ENCODE measurements at regions of chr16 and their contacts with region 1.

Region 1: GRCh38 chr16:31073968-31074813 is at the starts of genes ZNF646 and ZNF668:
- DNase-seq: peak; percentile 97
- ATAC-seq: peak; percentile 90
- H3K4me3 ChIP-seq: peak within 1 kb of the TSS; percentile 81
- H3K27ac ChIP-seq: peak within 1 kb of the TSS; percentile 76
- H3K4me1 ChIP-seq: peaks cover 15% of the 10 kb centered on the region; the same call in 1 of the 2 replicates
- H3K27me3 ChIP-seq: no peaks in the 10 kb centered on the region
- CTCF ChIP-seq: no peak
- total RNA-seq, gene ZNF646: 5.5 and 8.5 TPM in 2 replicates
- total RNA-seq, gene ZNF668: 15.6 and 19.2 TPM in 2 replicates

Region 2: GRCh38 chr16:30984669-30985400 is 89.4 kb before region 1 on chr16 and contains the start of gene HSD3B7:
- CTCF ChIA-PET with region 1: interaction called, 5 read pairs
- POLR2A ChIA-PET with region 1: no interaction called
- intact Hi-C with region 1: loop called (anchors 1 kb)
- DNase-seq: peak; percentile 78
- ATAC-seq: peak; percentile 90
- H3K4me3 ChIP-seq: peak within 1 kb of the TSS; percentile 52; the same call in 1 of the 2 replicates
- H3K27ac ChIP-seq: no peak within 1 kb of the TSS
- H3K4me1 ChIP-seq: peaks cover 7% of the 10 kb centered on the region; the same call in 1 of the 2 replicates
- H3K27me3 ChIP-seq: no peaks in the 10 kb centered on the region
- CTCF ChIP-seq: peak; percentile 74
- total RNA-seq, gene HSD3B7: 12.0 and 16.3 TPM in 2 replicates

Region 3: DNA sequence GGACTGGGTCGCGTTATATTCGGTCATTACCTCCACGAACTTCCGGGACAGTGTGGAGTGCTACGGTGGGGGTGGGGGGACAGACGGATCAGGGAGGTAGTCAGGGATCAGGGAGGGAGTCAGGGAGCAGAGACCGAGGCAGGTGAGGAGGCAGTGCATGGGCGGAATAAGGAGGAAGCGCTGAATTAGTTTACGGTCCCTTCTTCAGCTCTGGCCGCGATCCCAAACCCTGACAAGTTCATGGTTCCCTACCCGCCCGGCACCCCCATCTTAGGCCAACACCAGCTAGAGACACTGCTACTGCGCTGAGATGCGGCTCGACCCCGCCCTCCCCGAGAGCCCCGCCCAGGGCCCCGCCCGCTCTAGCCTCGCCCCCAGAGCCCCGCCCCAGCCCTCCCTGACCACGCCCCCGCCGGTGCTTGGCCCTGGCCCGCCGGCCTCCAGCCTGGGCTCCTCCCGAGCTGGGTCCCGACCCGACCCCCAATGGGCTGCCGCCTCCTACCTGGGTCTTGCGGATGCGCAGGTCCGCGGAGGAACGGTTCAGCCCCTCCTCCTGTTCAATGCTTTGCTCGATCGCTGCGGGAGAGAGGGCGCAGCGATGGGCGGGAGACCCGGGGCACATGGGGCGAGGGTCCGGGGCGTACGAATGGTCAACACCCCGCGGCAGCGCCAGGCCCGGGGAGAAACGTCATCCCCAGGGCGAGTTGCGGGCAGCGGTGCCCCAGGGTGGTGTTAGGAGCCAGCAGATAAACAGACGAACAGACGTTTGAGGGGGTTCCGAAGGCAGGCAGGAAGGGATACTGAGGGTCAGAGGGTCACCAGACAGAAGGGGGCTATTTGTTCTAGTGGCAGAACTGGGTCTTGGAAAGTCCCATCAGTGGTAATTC is 76.9 kb before region 1 on chr16:
- CTCF ChIA-PET with region 1: no interaction called
- POLR2A ChIA-PET with region 1: no interaction called
- intact Hi-C with region 1: loop called (anchors 5 kb)
- DNase-seq: peak; percentile 68
- ATAC-seq: peak; percentile 80
- H3K4me3 ChIP-seq: peak overlapping the region; percentile 83
- H3K27ac ChIP-seq: peak overlapping the region; percentile 86
- H3K4me1 ChIP-seq: peaks cover 31% of the 10 kb centered on the region
- H3K27me3 ChIP-seq: no peaks in the 10 kb centered on the region
- CTCF ChIP-seq: no peak

Region 4: GRCh38 chr16:31032736-31033708 is 41.2 kb before region 1 on chr16 and contains the start of gene STX4:
- CTCF ChIA-PET with region 1: no interaction called
- POLR2A ChIA-PET with region 1: no interaction called
- intact Hi-C with region 1: loop called (anchors 2 kb)
- DNase-seq: peak; percentile 92
- ATAC-seq: peak; percentile 80
- H3K4me3 ChIP-seq: peak within 1 kb of the TSS; percentile 98
- H3K27ac ChIP-seq: peak within 1 kb of the TSS; percentile 42
- H3K4me1 ChIP-seq: peaks cover 11% of the 10 kb centered on the region; the same call in 1 of the 2 replicates
- H3K27me3 ChIP-seq: no peaks in the 10 kb centered on the region
- CTCF ChIP-seq: no peak
- total RNA-seq, gene STX4: 27.4 and 36.1 TPM in 2 replicates

Region 5: DNA sequence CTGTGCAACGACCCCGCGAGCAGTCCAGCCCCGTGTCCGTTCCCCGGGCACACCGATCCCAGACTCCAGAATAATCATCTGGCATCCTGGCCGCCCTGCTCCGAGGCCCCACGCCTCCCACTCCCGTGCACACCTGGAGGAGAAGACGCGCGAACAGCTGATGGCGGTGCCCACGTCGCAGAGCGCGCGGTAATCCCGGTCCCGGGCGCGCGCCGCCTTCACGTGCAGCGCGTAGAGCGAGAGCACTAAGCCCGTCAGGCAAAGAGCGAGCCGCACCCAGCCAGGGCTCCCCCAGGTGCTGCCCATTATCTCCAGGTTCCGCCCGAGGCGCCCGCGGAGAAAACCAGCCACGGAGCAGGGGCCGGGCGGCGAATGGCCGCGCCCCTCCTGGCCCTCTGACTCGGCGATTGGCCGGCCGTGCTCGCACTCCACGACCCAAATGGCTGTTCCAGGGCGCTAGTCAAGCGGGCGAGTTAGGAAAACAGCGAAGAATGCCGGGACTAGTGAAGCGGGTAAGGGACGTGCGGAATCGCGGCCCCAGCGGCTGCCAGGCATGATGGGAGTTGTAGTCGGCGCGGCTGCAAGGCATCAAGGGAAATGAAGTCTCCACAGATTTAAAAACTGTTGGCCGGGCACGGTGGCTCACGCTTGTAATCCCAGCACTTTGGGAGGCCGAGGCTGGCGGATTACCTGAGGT is 20.4 kb after region 1 on chr16 and contains the start of gene VKORC1:
- CTCF ChIA-PET with region 1: no interaction called
- POLR2A ChIA-PET with region 1: no interaction called
- intact Hi-C with region 1: loop called (anchors 1 kb)
- DNase-seq: peak; percentile 96
- ATAC-seq: peak; percentile 94
- H3K4me3 ChIP-seq: peak within 1 kb of the TSS; percentile 98
- H3K27ac ChIP-seq: peak within 1 kb of the TSS; percentile 68
- H3K4me1 ChIP-seq: peaks cover 7% of the 10 kb centered on the region; the same call in 1 of the 2 replicates
- H3K27me3 ChIP-seq: no peaks in the 10 kb centered on the region
- CTCF ChIP-seq: no peak
- total RNA-seq, gene VKORC1: 105 and 127 TPM in 2 replicates

Region 6: DNA sequence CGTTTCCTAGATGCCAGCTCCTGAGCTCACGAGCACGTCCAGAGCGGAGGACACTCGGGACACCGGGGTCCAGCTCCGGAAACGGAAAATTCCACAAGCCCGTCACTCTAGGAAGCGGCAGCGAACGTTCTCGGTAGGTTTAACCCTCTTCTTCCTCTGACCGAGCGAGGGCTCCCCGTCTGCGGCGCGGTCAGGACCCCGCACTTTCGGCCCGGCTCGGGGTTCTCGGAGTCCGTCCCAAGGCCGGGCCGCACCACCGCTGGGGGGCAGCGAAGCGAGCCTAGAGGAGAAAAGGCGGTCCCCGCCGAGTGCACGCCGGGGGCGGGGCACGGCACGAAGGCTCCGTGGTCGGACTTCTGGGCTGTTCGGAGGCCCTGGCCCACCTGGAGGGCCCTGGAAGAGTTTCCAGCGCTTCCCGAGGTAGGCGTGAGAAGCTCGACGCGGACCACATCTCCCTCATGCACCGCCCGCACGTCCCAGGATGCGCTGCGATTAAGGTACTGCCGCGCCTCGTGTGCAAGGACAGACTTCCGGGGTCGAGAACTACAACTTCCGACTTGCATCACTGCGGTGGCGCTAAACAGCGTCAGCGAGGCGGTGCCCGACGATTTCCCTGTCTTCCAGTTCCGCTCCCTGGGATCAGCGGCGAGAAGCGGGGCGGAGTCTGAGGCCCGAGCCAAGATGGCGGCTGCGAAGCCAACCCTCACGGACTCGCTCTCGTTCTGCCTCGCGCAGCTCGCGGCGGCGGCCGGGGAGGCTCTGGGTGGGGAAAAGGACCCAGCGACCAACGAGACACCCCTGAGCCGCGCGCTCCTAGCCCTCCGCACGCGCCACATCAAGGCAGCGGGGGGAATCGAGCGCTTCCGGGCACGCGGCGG is 384.9 kb after region 1 on chr16 and contains the start of gene ARMC5:
- CTCF ChIA-PET with region 1: no interaction called
- POLR2A ChIA-PET with region 1: no interaction called
- intact Hi-C with region 1: loop called (anchors 5 kb)
- DNase-seq: peak; percentile 90
- ATAC-seq: peak; percentile 84
- H3K4me3 ChIP-seq: peak within 1 kb of the TSS; percentile 77
- H3K27ac ChIP-seq: peak within 1 kb of the TSS; percentile 94
- H3K4me1 ChIP-seq: peaks cover 13% of the 10 kb centered on the region
- H3K27me3 ChIP-seq: no peaks in the 10 kb centered on the region
- CTCF ChIP-seq: no peak; the same call in 1 of the 2 replicates
- total RNA-seq, gene ARMC5: 5.4 and 5.8 TPM in 2 replicates

Measured in PC-3 (cell line).